ENCODE measurements at regions of chr10 and their contacts with region 1.

Region 1: GRCh38 chr10:48300556-48300955 is 5.9 kb upstream of the MAPK8 start:
- DNase-seq: no peak
- ATAC-seq: peak; percentile 71
- H3K4me3 Mint-ChIP-seq: no peak overlapping the region
- H3K27ac Mint-ChIP-seq: no peak overlapping the region
- H3K4me1 Mint-ChIP-seq: peaks cover 9% of the 10 kb centered on the region
- H3K27me3 Mint-ChIP-seq: peaks cover 16% of the 10 kb centered on the region
- CTCF ChIP-seq: no peak

Region 2: GRCh38 chr10:48289501-48290238 is 10.9 kb before region 1 on chr10:
- CTCF ChIA-PET with region 1: interaction called, 18 read pairs
- POLR2A ChIA-PET with region 1: no interaction called
- DNase-seq: peak; percentile 76
- ATAC-seq: peak; percentile 91
- H3K4me3 Mint-ChIP-seq: no peak overlapping the region
- H3K27ac Mint-ChIP-seq: no peak overlapping the region
- H3K4me1 Mint-ChIP-seq: peaks cover 16% of the 10 kb centered on the region
- H3K27me3 Mint-ChIP-seq: peaks cover 2% of the 10 kb centered on the region; the same call in 1 of the 2 replicates
- CTCF ChIP-seq: peak; percentile 77